Psoas muscle (tissue), 8 donors: ENCODE measurements at regions of chr3 and their contacts with region 1.

Region 1: GRCh38 chr3:62622553-62623193 is 249.3 kb upstream of the FEZF2 start:
- DNase-seq: no peak
- ATAC-seq: peak in 1 of 4 donors; percentile 59
- H3K4me3 ChIP-seq: no peak overlapping the region
- H3K27ac ChIP-seq: no peak overlapping the region
- H3K4me1 ChIP-seq: no peaks in the 10 kb centered on the region
- H3K27me3 ChIP-seq: no peaks in the 10 kb centered on the region
- CTCF ChIP-seq: peak; percentile 57

Region 2: DNA sequence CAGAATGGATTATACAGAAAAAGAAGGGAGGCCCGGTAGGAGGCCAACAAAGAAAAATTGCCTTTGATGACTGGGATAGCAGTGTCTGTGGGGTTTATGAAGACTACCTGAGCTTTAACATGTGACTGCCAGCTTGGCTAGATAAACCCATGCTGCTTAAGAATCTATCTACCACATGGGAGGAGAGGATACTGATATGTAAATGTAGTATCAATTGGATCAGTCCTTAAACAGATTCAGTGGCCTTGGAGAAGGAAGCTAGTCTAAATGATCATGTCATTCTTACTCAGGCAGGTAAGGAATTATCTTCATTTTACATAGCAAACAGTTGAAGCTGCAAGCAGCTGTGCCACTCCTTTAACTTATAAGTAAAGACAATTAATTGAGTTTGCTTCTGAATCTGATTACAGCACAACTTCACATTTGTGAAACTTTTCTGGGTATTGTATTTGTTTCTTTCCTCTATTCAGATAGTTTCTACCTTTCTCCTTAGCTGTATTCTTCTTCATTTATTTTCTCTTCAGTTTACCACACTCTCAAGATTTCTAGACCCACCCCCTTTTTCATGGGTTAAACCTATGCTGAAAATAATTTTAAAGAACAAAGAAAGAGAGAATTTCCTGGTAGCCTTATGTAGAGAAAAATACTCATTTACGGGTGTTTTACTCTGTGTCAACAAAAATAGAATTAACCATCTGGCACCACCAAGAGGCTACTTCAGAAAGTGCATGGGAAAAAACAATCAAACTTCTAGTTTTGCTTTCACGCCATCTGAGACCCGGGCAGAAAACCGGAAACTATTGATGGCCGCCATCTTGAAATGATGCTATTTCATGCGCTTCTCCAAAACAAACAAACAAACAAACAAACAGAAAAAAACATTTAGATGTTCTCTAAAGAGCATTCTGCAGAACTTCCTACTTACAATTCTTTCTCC is 605.7 kb after region 1 on chr3:
- intact Hi-C with region 1: loop called (anchors 2 to 10 kb)
- DNase-seq: no peak
- ATAC-seq: no peak
- H3K4me3 ChIP-seq: no peak overlapping the region
- H3K27ac ChIP-seq: no peak overlapping the region
- H3K4me1 ChIP-seq: no peaks in the 10 kb centered on the region
- H3K27me3 ChIP-seq: peaks cover 0 to under 1% (median 0%) of the 10 kb centered on the region in 3 donors
- CTCF ChIP-seq: peak; percentile 25